MCF 10A (cell line): ENCODE measurements at regions of chr10 and their contacts with region 1.

Region 1: GRCh38 chr10:90179696-90180407 is 478.5 kb downstream of the KIF20B start:
- DNase-seq: peak; percentile 98
- H3K4me3 Mint-ChIP-seq: peak overlapping the region; percentile 28
- H3K27ac Mint-ChIP-seq: peak overlapping the region; percentile 99
- H3K4me1 Mint-ChIP-seq: peaks cover 54% of the 10 kb centered on the region
- H3K27me3 Mint-ChIP-seq: no peaks in the 10 kb centered on the region
- CTCF ChIP-seq: no peak

Region 2: GRCh38 chr10:90062786-90063185 is 117.1 kb before region 1 on chr10:
- CTCF ChIA-PET with region 1: no interaction called
- POLR2A ChIA-PET with region 1: no interaction called
- intact Hi-C with region 1: no loop called
- DNase-seq: no peak
- H3K4me3 Mint-ChIP-seq: no peak overlapping the region
- H3K27ac Mint-ChIP-seq: no peak overlapping the region
- H3K4me1 Mint-ChIP-seq: no peaks in the 10 kb centered on the region
- H3K27me3 Mint-ChIP-seq: no peaks in the 10 kb centered on the region
- CTCF ChIP-seq: no peak

Region 3: DNA sequence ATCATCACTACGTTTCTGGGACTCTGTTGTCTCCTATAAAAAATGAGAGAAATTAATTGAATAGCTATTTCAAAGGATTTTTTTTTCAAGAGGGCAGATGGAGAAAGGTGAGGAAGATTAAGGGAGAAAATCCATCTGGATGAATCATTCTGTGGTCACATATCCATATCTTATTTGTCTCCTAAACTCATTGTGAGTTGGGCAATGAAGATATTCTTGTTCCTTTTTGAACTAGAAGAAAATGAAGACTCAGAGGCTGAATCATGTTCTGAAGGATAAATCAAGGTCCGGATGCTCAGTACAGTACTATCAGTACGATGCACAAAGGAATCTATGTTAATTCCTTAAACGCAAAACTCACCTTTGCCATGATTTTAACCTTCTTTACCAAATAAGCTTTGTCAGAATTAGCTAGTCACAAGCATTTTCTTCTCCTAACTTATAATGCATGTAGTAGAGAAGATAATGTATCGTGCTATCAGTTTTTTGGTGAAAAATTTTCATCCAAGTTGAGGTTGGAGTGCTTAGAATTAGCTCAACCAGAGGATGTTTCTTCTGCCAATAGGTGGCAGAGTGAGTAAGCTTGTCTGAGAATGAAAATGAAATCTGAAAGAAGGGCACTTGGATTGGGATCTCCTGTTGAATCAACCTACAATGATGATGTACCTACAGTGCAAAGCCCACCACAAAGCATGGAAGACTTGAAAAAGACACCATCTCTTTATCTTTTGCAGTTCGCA is 31.6 kb before region 1 on chr10:
- CTCF ChIA-PET with region 1: interaction called, 5 read pairs
- POLR2A ChIA-PET with region 1: interaction called, 16 read pairs
- intact Hi-C with region 1: no loop called
- DNase-seq: peak; percentile 60
- H3K4me3 Mint-ChIP-seq: no peak overlapping the region
- H3K27ac Mint-ChIP-seq: peak overlapping the region; percentile 44
- H3K4me1 Mint-ChIP-seq: peaks cover 14% of the 10 kb centered on the region
- H3K27me3 Mint-ChIP-seq: no peaks in the 10 kb centered on the region
- CTCF ChIP-seq: peak; percentile 57

Region 4: GRCh38 chr10:90193240-90193985 is 13.6 kb after region 1 on chr10:
- CTCF ChIA-PET with region 1: interaction called, 3 read pairs
- POLR2A ChIA-PET with region 1: interaction called, 75 read pairs
- intact Hi-C with region 1: no loop called
- DNase-seq: no peak
- H3K4me3 Mint-ChIP-seq: no peak overlapping the region
- H3K27ac Mint-ChIP-seq: peak overlapping the region; percentile 29
- H3K4me1 Mint-ChIP-seq: peaks cover 47% of the 10 kb centered on the region
- H3K27me3 Mint-ChIP-seq: no peaks in the 10 kb centered on the region
- CTCF ChIP-seq: no peak

Region 5: GRCh38 chr10:90227217-90227656 is 47.4 kb after region 1 on chr10:
- CTCF ChIA-PET with region 1: interaction called, 4 read pairs
- POLR2A ChIA-PET with region 1: interaction called, 38 read pairs
- intact Hi-C with region 1: loop called (anchors 5 kb)
- DNase-seq: peak; percentile 96
- H3K4me3 Mint-ChIP-seq: no peak overlapping the region
- H3K27ac Mint-ChIP-seq: peak overlapping the region; percentile 49
- H3K4me1 Mint-ChIP-seq: peaks cover 42% of the 10 kb centered on the region
- H3K27me3 Mint-ChIP-seq: no peaks in the 10 kb centered on the region
- CTCF ChIP-seq: no peak

Region 6: GRCh38 chr10:90418869-90419652 is 239.2 kb after region 1 on chr10:
- CTCF ChIA-PET with region 1: interaction called, 3 read pairs
- POLR2A ChIA-PET with region 1: interaction called, 21 read pairs
- intact Hi-C with region 1: no loop called
- DNase-seq: peak; percentile 87
- H3K4me3 Mint-ChIP-seq: no peak overlapping the region
- H3K27ac Mint-ChIP-seq: peak overlapping the region; percentile 85
- H3K4me1 Mint-ChIP-seq: peaks cover 20% of the 10 kb centered on the region
- H3K27me3 Mint-ChIP-seq: no peaks in the 10 kb centered on the region
- CTCF ChIP-seq: no peak